ENCODE measurements at regions of chr9 and their contacts with region 1.

Region 1: DNA sequence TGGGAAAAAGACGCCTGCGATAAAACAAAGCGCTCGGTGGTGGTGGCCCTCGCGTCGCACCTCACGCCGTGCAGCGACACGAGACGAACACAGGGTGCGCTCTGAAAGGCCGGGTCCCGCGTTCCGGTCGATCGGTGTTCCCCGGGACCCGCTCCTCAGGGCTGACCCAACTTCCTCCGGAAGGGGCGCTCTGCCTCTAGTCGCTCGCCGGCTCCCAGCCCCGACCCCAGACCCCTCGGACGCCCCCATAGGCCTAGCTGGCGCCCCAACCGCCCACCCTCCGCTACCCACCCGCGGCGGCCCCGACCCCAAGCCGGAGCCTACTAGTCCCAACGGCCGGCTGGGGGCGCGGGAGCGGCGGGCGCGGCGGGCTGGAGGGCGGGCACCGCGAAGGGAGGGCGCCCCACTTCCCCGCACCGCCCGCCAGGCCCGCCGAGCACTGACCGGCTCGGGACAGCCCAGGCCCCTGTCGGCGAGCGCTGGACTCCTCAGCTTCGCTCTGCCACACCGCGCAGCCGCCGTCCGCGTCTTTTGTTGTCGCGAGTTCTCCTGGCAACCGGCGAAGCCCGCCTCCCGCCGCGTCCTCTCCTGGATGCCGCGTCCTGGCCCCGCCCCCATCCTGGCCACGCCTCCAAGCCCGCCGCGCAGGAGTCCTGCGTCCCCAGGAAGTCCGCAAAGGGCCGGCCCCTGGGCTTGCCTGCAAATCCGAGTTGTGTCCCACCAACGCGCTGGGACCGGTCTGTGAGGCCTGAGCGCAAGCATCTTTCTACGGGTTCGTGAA is at the start of gene KIF27:
- DNase-seq: peak; percentile 96
- CTCF ChIP-seq: peak; percentile 11

Region 2: GRCh38 chr9:83334320-83334719 is 586.8 kb before region 1 on chr9:
- in situ Hi-C with region 1: loop called (anchors 25 kb)
- DNase-seq: peak; percentile 44
- CTCF ChIP-seq: peak; percentile 91

Region 3: DNA sequence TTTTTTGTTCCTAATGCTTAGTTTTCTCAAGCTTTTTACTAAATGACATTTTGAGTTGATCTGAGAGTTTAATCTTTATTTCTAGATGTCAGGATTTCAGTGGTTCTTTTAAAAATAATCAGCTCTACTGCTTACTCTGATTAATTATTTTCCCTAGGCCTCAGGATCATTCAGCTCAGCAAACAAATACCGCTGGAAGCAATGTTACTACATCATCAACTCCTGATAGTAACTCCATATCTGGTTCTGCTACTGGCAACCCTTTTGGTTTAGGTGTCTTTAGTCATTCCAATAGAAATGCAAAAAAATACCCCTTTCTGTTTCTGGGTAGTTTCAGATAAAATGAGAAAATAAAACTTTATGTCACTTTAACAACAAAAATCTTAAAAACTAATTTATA is 303.8 kb before region 1 on chr9:
- in situ Hi-C with region 1: loop called (anchors 10 kb)
- DNase-seq: no peak
- CTCF ChIP-seq: no peak

Measured in GM13976 (cell line).